Right ventricle myocardium superior (tissue), 1 donor: ENCODE measurements at regions of chr21 and their contacts with region 1.

Region 1: GRCh38 chr21:31798842-31799704 is 67.2 kb upstream of the SCAF4 start:
- DNase-seq: no peak
- ATAC-seq: no peak

Region 2: DNA sequence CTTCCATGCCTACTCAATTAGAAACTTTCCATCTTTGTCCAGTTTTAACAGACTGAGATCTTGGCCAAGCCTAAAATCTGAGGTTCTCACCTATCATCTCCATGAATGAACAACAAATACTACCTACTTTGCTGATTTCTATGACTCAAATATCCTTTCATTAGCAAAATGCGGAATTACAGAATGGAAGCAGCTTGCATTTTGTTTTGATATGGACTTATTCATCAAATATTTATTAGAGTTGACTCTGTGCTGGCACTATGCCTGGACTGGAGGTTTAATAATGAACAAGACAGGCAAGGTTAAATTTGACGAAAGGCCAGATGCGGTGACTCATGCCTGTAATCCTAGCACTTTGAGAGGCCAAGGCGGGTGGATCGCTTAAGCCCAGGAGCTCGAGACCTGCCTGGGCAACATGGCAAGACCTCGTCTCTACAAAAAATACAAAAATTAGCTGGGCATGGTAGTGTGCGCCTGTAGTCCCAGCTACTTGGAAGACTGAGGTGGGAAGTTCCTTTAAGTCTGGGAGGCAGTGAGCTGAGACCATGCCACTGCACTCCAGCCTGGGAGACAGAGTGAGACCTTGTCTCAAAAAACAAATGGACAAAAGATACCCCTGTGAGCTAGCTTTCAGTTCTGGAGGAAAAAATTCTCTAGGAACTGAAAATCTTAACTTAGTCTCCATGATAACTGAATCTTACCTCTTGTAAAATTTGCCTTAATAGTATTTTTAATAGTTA is 168.9 kb before region 1 on chr21:
- intact Hi-C with region 1: no loop called
- DNase-seq: no peak
- ATAC-seq: no peak

Region 3: DNA sequence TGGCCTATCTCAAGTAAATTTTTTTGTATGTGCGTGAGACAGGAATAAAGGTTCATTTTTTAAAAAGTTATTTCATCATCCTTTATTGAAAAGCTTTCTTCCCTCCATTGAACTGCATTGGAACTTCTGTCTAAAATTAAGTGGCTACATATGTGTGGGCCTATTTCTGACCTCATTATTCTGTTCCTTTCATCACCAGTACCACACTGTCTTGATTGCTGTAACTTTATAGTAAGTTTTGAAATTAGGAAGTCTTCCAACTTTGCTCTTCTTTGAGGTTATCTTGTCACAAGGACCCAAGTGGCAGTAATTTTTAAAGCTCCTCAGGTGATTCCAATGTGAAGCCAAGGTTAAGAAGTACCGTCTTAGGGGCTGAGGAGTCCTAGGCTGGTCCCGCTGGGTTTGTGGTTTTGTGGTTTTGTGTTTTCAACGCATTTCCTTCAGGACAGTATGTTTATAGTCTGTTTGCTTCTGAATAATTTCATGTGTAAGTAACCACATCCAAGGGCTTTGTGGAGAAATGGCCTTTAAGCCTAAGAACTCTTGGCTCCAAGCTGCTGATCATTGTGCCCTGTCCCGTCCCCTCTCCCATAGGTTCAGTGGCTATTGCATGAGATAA is 54.8 kb before region 1 on chr21:
- intact Hi-C with region 1: loop called (anchors 10 kb)
- DNase-seq: no peak
- ATAC-seq: no peak